SK-N-SH (cell line): ENCODE measurements at regions of chr14 and their contacts with region 1.

Region 1: GRCh38 chr14:94001501-94002396 is 4.6 kb downstream of the CCDC197 start:
- DNase-seq: peak; percentile 86
- H3K4me3 ChIP-seq: peak overlapping the region in 1 of 2 experiments; percentile 22; a peak in 1 of 4 replicates
- H3K27ac ChIP-seq: no peak overlapping the region
- H3K4me1 ChIP-seq: peaks cover 0 to 5% of the 10 kb centered on the region in 2 experiments; a peak in 1 of 4 replicates
- H3K27me3 ChIP-seq: no peaks in the 10 kb centered on the region
- CTCF ChIP-seq: peak; percentile 94
- EP300 ChIP-seq: no peak
- RAD21 ChIP-seq: peak; percentile 82

Region 2: GRCh38 chr14:93984987-93985410 is 16.8 kb before region 1 on chr14:
- CTCF ChIA-PET with region 1: interaction called, 38 read pairs
- POLR2A ChIA-PET with region 1: no interaction called
- DNase-seq: peak; percentile 47
- H3K4me3 ChIP-seq: no peak overlapping the region
- H3K27ac ChIP-seq: no peak overlapping the region
- H3K4me1 ChIP-seq: peaks cover 5 to 7% of the 10 kb centered on the region in 2 experiments; a peak in 2 of 4 replicates
- H3K27me3 ChIP-seq: no peaks in the 10 kb centered on the region
- CTCF ChIP-seq: peak; percentile 58
- EP300 ChIP-seq: no peak
- RAD21 ChIP-seq: peak; percentile 29; the same call in 1 of the 2 replicates

Region 3: GRCh38 chr14:93991212-93991611 is 10.5 kb before region 1 on chr14:
- CTCF ChIA-PET with region 1: interaction called, 38 read pairs
- POLR2A ChIA-PET with region 1: no interaction called
- DNase-seq: no peak
- H3K4me3 ChIP-seq: no peak overlapping the region
- H3K27ac ChIP-seq: no peak overlapping the region
- H3K4me1 ChIP-seq: peaks cover 7 to 11% of the 10 kb centered on the region in 2 experiments; a peak in 3 of 4 replicates
- H3K27me3 ChIP-seq: no peaks in the 10 kb centered on the region
- CTCF ChIP-seq: no peak
- EP300 ChIP-seq: no peak
- RAD21 ChIP-seq: no peak